Tibial artery (tissue), 4 donors: ENCODE measurements at regions of chr11 and their contacts with region 1.

Region 1: DNA sequence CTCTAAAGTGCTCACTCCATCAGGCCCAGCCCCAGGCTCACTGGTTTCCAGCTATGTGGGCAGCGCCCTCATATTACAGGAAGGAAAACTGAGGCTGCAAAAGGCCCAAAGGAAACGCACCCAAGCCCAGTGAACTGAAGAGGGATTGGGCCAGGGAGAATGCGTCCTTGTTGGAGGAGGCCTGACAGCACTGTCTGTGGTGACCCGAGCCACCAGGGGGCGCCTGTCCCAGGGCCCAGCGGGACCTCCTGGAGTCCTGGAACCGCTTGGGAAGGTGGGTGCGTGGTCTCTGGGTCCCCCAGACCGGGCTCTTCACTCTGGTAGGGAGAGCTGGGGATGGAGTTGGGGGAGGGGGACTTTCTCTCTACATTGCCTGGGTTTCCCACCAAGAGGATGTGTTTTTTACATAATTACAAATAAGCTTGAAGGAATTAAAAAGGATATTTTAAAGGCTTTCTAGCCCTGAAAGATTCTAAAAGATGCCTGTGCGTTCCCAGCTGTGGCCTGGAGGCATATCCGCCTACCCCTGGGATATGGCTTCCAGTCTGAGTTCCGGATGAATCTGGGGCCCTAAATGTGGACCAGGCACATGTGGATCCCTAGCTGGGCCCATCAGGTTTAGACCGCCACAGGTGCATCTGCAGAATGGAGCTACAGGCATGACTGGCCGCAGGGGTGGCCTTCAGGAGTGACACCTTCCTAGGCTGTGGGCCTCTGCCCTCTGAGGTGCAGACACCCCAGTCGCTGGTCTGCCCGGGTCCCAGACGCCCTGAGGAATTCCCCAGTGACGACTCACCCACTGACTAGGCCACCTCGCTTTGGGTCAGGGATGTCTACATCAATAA is 4.2 kb downstream of the SPI1 start:
- DNase-seq: peak; percentile 76 to 89
- H3K4me3 ChIP-seq: no peak overlapping the region
- H3K27ac ChIP-seq: no peak overlapping the region
- H3K4me1 ChIP-seq: no peaks in the 10 kb centered on the region
- H3K27me3 ChIP-seq: no peaks in the 10 kb centered on the region
- CTCF ChIP-seq: peak; percentile 91

Region 2: DNA sequence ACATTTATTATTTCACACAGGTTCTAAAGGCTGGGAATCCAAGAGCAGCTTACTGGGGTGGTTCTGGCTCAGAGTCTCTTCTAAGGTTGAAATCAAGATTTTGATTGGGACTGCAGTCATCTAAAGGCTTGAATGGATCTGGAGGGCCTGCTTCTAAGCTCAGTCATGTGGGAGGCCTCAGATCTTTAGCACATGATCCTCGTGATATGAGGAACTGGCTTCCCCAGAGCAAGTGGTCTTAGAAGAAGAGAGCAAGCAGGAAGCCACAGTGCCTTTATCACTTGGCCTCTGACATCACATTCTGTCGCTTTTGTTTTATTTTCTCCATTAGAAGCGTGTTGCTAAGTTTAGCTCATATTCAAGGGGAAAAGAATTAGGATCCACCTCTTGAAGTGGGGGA is 286.3 kb before region 1 on chr11:
- intact Hi-C with region 1: no loop called
- DNase-seq: no peak
- H3K4me3 ChIP-seq: no peak overlapping the region
- H3K27ac ChIP-seq: no peak overlapping the region
- H3K4me1 ChIP-seq: no peaks in the 10 kb centered on the region
- H3K27me3 ChIP-seq: no peaks in the 10 kb centered on the region
- CTCF ChIP-seq: no peak

Region 3: DNA sequence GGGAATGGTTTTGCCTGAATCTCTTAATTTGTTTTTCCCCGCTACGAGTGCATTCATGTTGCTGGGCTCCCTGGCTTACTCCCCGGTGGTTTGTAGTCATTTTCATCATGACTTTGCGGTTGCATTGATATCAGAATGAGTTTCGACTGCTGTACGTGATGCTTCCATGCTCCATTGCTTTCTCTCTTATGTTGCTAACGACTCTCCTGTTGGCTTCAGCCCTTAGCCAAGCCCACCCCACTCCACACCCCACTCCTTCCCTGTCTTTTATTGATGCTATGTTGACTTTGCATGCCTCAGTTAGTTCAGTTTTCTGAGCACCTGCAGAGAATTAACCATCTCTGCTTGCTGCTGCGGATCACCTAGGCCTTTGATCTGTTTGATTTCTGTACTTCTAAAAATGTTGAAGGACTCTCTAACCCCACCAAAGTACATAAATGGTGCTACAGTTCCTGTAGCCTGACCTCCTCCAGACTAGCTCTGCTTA is 262.7 kb before region 1 on chr11:
- intact Hi-C with region 1: no loop called
- DNase-seq: no peak
- H3K4me3 ChIP-seq: no peak overlapping the region
- H3K27ac ChIP-seq: no peak overlapping the region
- H3K4me1 ChIP-seq: no peaks in the 10 kb centered on the region
- H3K27me3 ChIP-seq: no peaks in the 10 kb centered on the region
- CTCF ChIP-seq: no peak

Region 4: GRCh38 chr11:47394322-47395222 is 20.5 kb after region 1 on chr11:
- intact Hi-C with region 1: no loop called
- DNase-seq: peak in 1 of 2 donors; percentile 64
- H3K4me3 ChIP-seq: peak overlapping the region; percentile 13 to 22
- H3K27ac ChIP-seq: peak overlapping the region; percentile 22 to 48
- H3K4me1 ChIP-seq: peaks cover 0 to 3% (median 1%) of the 10 kb centered on the region in 4 donors
- H3K27me3 ChIP-seq: no peaks in the 10 kb centered on the region
- CTCF ChIP-seq: no peak

Region 5: DNA sequence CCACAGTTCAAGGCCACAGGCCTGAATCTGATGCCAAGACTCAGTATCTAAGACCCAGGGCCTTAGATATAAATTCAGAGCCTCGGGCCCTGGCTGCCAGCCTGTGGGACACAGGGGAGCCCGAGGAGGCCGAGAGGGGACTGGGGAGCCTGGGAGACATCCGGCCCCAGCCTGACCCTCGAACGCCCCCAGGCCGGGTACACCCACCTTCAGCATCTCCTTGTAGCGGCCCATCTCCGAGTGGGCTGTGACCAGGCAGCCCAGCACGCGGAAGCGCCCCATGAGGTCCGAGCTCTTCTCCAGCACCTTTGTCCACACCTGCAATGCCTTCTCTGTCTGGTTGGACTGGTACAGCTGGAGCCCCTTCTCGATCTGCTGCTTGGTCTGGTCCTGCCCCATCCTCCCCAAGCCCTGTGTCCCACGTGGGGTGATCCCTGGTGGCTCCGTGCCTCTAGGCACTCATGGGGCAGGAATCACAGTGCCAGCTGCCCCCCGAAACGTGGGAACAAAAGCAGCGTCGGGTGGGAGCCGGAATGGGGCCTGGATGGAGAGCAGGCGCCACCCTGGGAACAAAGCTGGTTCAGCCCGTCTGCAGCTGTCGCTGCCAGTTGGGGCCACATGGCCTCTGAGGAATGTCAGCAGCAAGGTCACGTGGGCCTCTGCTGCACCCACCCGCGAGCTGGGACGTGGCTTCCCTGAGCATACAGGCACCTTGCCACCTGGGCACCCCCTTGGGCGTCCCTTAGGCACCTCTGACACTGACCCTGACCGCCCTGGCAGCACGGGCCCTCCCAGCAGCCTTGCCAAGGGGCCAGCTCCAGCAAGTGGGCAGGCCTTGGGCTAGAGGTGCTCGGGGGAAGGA is 74.7 kb after region 1 on chr11 and contains the start of gene RAPSN:
- intact Hi-C with region 1: loop called (anchors 5 kb)
- DNase-seq: no peak
- H3K4me3 ChIP-seq: no peak within 1 kb of the TSS
- H3K27ac ChIP-seq: no peak within 1 kb of the TSS
- H3K4me1 ChIP-seq: no peaks in the 10 kb centered on the region
- H3K27me3 ChIP-seq: no peaks in the 10 kb centered on the region
- CTCF ChIP-seq: no peak

Region 6: DNA sequence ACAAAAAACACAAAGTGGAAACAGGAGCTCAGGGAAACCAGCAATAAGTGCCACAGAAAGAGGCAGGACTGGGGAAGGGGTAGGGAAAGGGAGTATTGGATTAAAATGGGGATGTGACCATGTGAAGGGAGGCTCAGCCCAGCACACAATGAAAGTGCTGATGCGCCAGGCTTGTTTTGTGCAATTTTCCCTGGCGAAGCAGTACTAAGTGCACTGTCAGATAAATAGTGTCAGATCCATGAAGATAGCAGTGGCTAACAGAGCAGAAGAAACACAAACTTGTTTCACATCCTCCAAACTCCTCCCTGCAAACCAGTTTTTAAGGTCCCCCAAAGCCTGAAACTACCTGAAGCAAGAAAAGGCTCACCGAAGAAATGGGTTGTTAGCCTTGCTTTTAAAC is 125.5 kb after region 1 on chr11:
- intact Hi-C with region 1: no loop called
- DNase-seq: no peak
- H3K4me3 ChIP-seq: no peak overlapping the region
- H3K27ac ChIP-seq: peak overlapping the region; percentile 4 to 7
- H3K4me1 ChIP-seq: peaks cover 0 to 82% (median 57%) of the 10 kb centered on the region in 4 donors
- H3K27me3 ChIP-seq: no peaks in the 10 kb centered on the region
- CTCF ChIP-seq: no peak

Region 7: DNA sequence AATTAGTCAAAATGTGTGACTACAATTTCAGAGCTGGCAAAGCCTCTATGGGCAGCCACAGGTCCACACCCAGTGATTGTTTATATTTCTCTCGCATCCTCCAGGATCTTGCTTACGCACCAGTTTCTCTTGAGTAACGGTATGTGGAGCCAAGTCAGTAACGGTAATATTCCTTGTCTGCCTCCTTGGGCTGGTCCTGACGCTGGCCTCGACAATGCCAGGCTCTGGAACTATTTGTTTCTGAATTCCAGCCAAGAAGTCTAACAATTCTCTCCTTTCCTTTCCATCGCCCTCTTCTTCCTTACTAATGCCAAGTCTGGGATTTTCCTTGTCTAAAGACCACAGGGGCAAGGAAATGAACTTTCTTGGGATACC is 484.1 kb after region 1 on chr11:
- intact Hi-C with region 1: loop called (anchors 10 kb)
- DNase-seq: peak in 1 of 2 donors; percentile 27
- H3K4me3 ChIP-seq: no peak overlapping the region
- H3K27ac ChIP-seq: no peak overlapping the region
- H3K4me1 ChIP-seq: peaks cover 0 to 12% (median 5%) of the 10 kb centered on the region in 4 donors
- H3K27me3 ChIP-seq: no peaks in the 10 kb centered on the region
- CTCF ChIP-seq: no peak